CD4-positive, alpha-beta memory T cell (primary cell): ENCODE measurements at regions of chr19 and their contacts with region 1.

Region 1: GRCh38 chr19:38929929-38930775 is at the start of gene SARS2:
- DNase-seq: peak; percentile 92 to 99 (median 97)
- H3K4me3 ChIP-seq: peak within 1 kb of the TSS; percentile 85 to 87
- H3K4me3 Mint-ChIP-seq: peak within 1 kb of the TSS; percentile 94 to 99 (median 98)
- H3K27ac ChIP-seq: peak within 1 kb of the TSS; percentile 93
- H3K27ac Mint-ChIP-seq: peak within 1 kb of the TSS; percentile 98 to 100 (median 100)
- H3K4me1 ChIP-seq: peaks cover 40% of the 10 kb centered on the region
- H3K4me1 Mint-ChIP-seq: peaks cover 13 to 57% (median 32%) of the 10 kb centered on the region in 4 donors
- H3K27me3 ChIP-seq: no peaks in the 10 kb centered on the region
- H3K27me3 Mint-ChIP-seq: no peaks in the 10 kb centered on the region
- total RNA-seq, gene SARS2: 17.0 to 20.2 TPM

Region 2: GRCh38 chr19:38374429-38375176 is 555.5 kb before region 1 on chr19 and contains the start of gene PSMD8:
- CTCF ChIA-PET with region 1: interaction called, 7 read pairs
- POLR2A ChIA-PET with region 1: interaction called, 12 read pairs
- intact Hi-C with region 1: no loop called
- DNase-seq: peak; percentile 98 to 99 (median 99)
- H3K4me3 ChIP-seq: peak within 1 kb of the TSS; percentile 71 to 97
- H3K4me3 Mint-ChIP-seq: peak within 1 kb of the TSS; percentile 96 to 99 (median 98)
- H3K27ac ChIP-seq: peak within 1 kb of the TSS; percentile 94
- H3K27ac Mint-ChIP-seq: peak within 1 kb of the TSS; percentile 90 to 99 (median 98)
- H3K4me1 ChIP-seq: peaks cover 30% of the 10 kb centered on the region
- H3K4me1 Mint-ChIP-seq: peaks cover 19 to 34% (median 24%) of the 10 kb centered on the region in 4 donors
- H3K27me3 ChIP-seq: no peaks in the 10 kb centered on the region
- H3K27me3 Mint-ChIP-seq: peaks cover 2% of the 10 kb centered on the region in 2 donors
- total RNA-seq, gene PSMD8: 89.6 to 90.6 TPM

Region 3: GRCh38 chr19:38538793-38539528 is 391.2 kb before region 1 on chr19:
- CTCF ChIA-PET with region 1: interaction called, 10 read pairs
- POLR2A ChIA-PET with region 1: interaction called, 7 read pairs
- intact Hi-C with region 1: loop called (anchors 1 kb)
- DNase-seq: peak; percentile 66 to 81 (median 72)
- H3K4me3 ChIP-seq: peak overlapping the region in 1 of 2 donors; percentile 33
- H3K4me3 Mint-ChIP-seq: peak overlapping the region; percentile 43 to 82 (median 69)
- H3K27ac ChIP-seq: peak overlapping the region; percentile 12
- H3K27ac Mint-ChIP-seq: peak overlapping the region; percentile 82 to 95 (median 87)
- H3K4me1 ChIP-seq: peaks cover 44% of the 10 kb centered on the region
- H3K4me1 Mint-ChIP-seq: peaks cover 24 to 61% (median 41%) of the 10 kb centered on the region in 4 donors
- H3K27me3 ChIP-seq: no peaks in the 10 kb centered on the region
- H3K27me3 Mint-ChIP-seq: no peaks in the 10 kb centered on the region

Region 4: GRCh38 chr19:38634757-38635482 is 295.2 kb before region 1 on chr19:
- CTCF ChIA-PET with region 1: interaction called, 35 read pairs
- POLR2A ChIA-PET with region 1: no interaction called
- intact Hi-C with region 1: loop called (anchors 1 kb)
- DNase-seq: peak; percentile 59 to 74 (median 68)
- H3K4me3 ChIP-seq: no peak overlapping the region
- H3K4me3 Mint-ChIP-seq: peak overlapping the region in 5 of 8 donors; percentile 32 to 70 (median 57)
- H3K27ac ChIP-seq: peak overlapping the region; percentile 23
- H3K27ac Mint-ChIP-seq: peak overlapping the region; percentile 82 to 92 (median 90)
- H3K4me1 ChIP-seq: peaks cover 32% of the 10 kb centered on the region
- H3K4me1 Mint-ChIP-seq: peaks cover 10 to 41% (median 27%) of the 10 kb centered on the region in 4 donors
- H3K27me3 ChIP-seq: no peaks in the 10 kb centered on the region
- H3K27me3 Mint-ChIP-seq: no peaks in the 10 kb centered on the region

Region 5: DNA sequence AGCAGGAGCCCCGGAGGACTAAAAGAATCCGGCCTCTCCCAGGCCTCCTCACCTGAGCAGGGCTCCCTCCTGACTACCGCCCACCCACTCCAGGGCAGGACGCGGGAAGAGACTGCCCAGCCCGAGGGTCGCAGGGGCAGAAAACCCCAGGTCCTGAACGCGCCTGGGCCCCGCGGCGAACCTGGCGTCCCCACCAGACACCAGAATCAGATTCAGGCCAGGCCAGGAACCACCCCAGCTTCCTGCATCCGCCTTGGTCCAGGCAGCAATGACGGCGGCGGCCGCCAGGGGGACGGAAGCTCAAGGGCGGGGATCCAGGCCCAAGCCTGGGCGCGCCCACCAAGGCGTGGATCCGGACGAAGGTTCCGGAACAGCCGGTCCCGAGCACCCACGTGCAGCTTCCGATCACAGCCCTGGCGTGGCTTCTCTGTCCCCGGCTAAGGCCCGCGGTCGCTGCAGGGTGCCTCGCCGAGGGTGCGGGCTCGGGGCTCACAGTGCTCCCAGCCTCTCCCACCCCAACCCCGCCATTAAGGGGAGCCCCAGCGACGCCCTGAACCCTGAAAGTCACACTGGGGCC is 160.4 kb before region 1 on chr19:
- CTCF ChIA-PET with region 1: interaction called, 12 read pairs
- POLR2A ChIA-PET with region 1: interaction called, 15 read pairs
- intact Hi-C with region 1: no loop called
- DNase-seq: peak; percentile 87 to 94 (median 90)
- H3K4me3 ChIP-seq: peak overlapping the region in 1 of 2 donors; percentile 47
- H3K4me3 Mint-ChIP-seq: peak overlapping the region; percentile 37 to 71 (median 64)
- H3K27ac ChIP-seq: peak overlapping the region; percentile 48
- H3K27ac Mint-ChIP-seq: peak overlapping the region; percentile 78 to 95 (median 91)
- H3K4me1 ChIP-seq: peaks cover 6% of the 10 kb centered on the region
- H3K4me1 Mint-ChIP-seq: peaks cover 6 to 8% (median 7%) of the 10 kb centered on the region in 4 donors
- H3K27me3 ChIP-seq: no peaks in the 10 kb centered on the region
- H3K27me3 Mint-ChIP-seq: no peaks in the 10 kb centered on the region

Region 6: DNA sequence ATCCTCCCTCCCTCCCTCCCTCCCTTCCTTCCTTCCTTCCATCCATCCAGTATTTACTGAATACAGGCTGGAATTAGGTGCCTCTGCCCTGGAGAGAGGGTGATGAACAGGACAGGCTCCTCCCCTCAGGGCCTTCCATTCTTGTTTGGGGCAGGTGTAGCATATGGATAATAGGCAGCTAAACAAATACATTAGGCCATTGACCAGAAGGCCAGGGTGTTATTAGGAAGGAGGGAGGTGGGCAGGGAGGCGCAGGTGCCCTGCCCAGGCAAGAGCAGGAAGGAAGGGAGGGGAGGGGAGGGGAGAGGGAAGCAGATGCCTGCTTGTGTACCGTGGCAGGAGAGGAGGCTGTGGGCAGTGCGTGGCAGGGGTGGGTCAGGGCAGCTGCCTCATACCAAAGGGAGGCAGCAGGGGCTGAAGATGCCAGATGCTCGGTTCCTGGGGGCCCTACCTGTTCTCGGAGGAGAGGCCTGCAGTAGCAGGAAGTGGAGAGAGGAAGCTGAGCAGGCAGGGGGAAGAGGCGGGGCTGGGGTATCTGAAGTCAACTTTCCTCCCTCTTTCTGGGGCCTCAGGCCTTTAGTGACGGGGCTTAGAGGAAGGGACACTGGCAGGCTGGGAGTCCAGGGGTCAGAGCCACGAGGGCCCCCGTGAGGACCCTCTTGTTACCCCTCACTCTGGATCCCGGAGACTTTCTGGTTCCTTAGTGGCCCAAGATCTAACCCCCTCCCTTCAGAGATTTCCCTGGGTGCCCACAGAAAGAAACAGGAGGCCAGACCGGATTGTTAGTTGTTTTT is 52.2 kb before region 1 on chr19 and contains the start of gene RINL:
- CTCF ChIA-PET with region 1: interaction called, 17 read pairs
- POLR2A ChIA-PET with region 1: interaction called, 10 read pairs
- intact Hi-C with region 1: no loop called
- DNase-seq: peak; percentile 68 to 82 (median 72)
- H3K4me3 ChIP-seq: peak within 1 kb of the TSS; percentile 41 to 73
- H3K4me3 Mint-ChIP-seq: peak within 1 kb of the TSS; percentile 79 to 94 (median 88)
- H3K27ac ChIP-seq: peak within 1 kb of the TSS; percentile 89
- H3K27ac Mint-ChIP-seq: peak within 1 kb of the TSS; percentile 96 to 99 (median 97)
- H3K4me1 ChIP-seq: peaks cover 49% of the 10 kb centered on the region
- H3K4me1 Mint-ChIP-seq: peaks cover 21 to 40% (median 30%) of the 10 kb centered on the region in 4 donors
- H3K27me3 ChIP-seq: no peaks in the 10 kb centered on the region
- H3K27me3 Mint-ChIP-seq: no peaks in the 10 kb centered on the region
- total RNA-seq, gene RINL: 64.4 to 65.9 TPM

Region 7: GRCh38 chr19:38949580-38950367 is 19.6 kb after region 1 on chr19:
- CTCF ChIA-PET with region 1: interaction called, 12 read pairs
- POLR2A ChIA-PET with region 1: no interaction called
- intact Hi-C with region 1: loop called (anchors 1 kb)
- DNase-seq: peak; percentile 66 to 75 (median 74)
- H3K4me3 ChIP-seq: peak overlapping the region in 1 of 2 donors; percentile 24
- H3K4me3 Mint-ChIP-seq: peak overlapping the region; percentile 63 to 80 (median 72)
- H3K27ac ChIP-seq: no peak overlapping the region
- H3K27ac Mint-ChIP-seq: peak overlapping the region in 3 of 7 donors; percentile 66 to 88 (median 68)
- H3K4me1 ChIP-seq: peaks cover 8% of the 10 kb centered on the region
- H3K4me1 Mint-ChIP-seq: peaks cover 11 to 17% (median 14%) of the 10 kb centered on the region in 4 donors
- H3K27me3 ChIP-seq: no peaks in the 10 kb centered on the region
- H3K27me3 Mint-ChIP-seq: peaks cover 6 to 9% of the 10 kb centered on the region in 2 donors

Region 8: DNA sequence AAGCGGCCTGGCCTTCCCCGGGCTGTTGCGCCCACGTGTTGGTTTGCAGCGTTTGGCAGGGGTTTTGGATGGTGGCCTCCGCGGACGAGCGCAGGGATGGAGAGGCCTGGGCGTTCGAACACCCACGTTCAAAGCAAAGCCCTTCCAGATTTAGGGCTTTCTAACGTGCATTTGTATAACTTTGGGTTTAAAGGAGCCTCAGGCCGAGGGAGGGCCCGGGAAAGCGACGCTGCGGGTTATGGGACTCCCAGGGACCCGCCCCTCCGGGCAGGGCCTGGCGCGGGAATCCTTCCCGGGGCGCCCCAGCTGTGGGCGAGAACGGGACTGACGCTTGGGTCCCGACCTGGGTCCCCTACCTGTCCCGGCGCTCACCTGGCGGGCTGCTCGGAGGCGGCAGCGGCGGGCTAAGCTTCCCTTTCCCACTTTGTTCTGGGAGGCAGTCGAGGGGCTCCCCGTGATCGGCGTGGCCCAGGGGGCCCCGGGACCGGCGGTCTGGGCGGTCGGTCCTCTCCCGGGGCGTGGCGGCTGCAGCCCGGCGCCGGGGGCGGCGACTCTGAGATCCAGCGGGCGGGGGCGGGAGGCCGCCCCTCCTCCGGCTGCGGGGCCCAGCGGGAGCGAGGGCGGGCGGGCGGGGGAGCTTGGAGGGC is 45.2 kb after region 1 on chr19 and contains the start of gene FBXO17:
- CTCF ChIA-PET with region 1: no interaction called
- POLR2A ChIA-PET with region 1: no interaction called
- intact Hi-C with region 1: no loop called
- DNase-seq: no peak
- H3K4me3 ChIP-seq: no peak within 1 kb of the TSS
- H3K4me3 Mint-ChIP-seq: peak within 1 kb of the TSS; percentile 27 to 76 (median 61)
- H3K27ac ChIP-seq: no peak within 1 kb of the TSS
- H3K27ac Mint-ChIP-seq: peak within 1 kb of the TSS in 1 of 7 donors; percentile 19
- H3K4me1 ChIP-seq: no peaks in the 10 kb centered on the region
- H3K4me1 Mint-ChIP-seq: peaks cover 0 to 19% (median 11%) of the 10 kb centered on the region in 4 donors
- H3K27me3 ChIP-seq: no peaks in the 10 kb centered on the region
- H3K27me3 Mint-ChIP-seq: peaks cover 17 to 25% of the 10 kb centered on the region in 2 donors
- total RNA-seq, gene FBXO17: not detected